RWPE1 (cell line): ENCODE measurements at regions of chr12 and their contacts with region 1.

Region 1: GRCh38 chr12:19115285-19115684 is 14.2 kb upstream of the PLEKHA5 start:
- DNase-seq: no peak
- H3K27ac ChIP-seq: no peak overlapping the region
- CTCF ChIP-seq: no peak

Region 2: DNA sequence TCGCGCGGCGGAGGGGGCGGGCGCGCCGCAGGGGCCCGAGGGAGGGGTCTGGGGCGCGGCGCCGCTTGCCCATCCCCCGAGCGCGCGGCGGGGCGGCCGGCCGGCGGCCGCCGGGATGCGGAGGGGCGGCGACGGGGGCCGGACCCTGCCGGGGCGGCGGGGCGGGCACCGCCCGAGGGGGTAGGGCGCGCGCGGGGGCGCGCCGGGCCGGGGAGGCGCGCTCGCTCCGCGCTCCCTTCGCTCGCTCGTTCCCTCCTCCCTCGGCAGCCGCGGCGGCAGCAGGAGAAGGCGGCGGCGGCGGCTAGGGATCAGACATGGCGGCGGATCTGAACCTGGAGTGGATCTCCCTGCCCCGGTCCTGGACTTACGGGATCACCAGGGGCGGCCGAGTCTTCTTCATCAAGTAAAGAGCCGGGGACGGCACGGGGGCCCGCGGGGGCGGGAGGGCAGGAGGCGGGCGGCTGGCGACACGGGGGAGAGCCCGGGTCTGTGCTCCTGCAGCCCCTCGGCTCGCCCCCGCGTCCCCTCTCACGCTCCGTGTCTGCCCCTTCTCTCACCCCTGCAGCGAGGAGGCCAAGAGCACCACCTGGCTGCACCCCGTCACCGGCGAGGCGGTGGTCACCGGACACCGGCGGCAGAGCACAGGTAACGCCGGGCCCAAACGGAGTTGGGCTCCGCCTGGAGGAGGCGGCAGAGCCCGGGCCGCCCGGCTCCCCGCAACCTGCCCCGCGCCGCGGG is 14.4 kb after region 1 on chr12 and contains the start of gene PLEKHA5:
- CTCF ChIA-PET with region 1: interaction called, 3 read pairs
- POLR2A ChIA-PET with region 1: interaction called, 11 read pairs
- DNase-seq: peak; percentile 47
- H3K27ac ChIP-seq: peak within 1 kb of the TSS; percentile 90
- CTCF ChIP-seq: no peak